ENCODE measurements at regions of chr19 and their contacts with region 1.

Region 1: DNA sequence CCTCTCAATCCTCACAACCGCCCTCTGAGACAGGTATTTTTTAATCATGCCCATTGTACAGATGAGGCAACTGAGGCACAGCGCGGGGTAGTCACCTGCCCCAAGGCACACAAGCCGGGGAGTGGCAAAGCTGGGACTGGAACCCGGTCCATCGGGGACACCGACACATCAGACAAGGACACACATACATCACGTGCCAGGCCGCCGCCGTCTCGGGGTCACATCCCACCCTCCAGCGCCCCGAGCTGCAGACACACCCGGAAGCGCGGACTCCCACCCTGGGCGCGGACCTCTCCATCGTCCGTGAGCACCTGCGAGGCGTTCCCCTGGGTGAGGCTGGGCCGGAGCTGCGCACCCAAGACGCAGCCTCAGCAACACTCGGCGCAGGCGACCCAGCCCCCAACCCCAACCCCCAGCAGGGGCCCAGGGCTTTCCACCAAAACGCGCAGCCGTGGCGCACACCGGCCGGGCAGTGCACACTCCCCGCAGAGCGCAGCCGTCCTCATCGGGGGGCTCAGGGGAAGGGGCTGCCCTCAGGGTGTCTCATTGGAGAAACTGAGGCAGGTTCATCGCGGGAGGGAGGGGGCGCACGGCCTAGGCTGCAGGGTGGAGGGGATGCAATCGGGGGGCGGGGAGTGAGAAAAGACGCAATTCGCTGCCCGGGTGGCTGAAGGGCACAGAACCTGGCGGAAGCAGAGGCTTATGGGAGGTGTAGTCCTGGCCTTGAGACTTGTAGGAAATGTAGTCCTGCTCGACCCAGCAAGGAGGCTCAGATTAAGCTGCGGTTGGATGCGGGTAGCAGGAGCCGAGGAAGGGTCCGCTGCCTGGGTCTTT is 1.9 kb upstream of the LMTK3 start:
- DNase-seq: peak; percentile 81
- ATAC-seq: peak; percentile 84

Region 2: DNA sequence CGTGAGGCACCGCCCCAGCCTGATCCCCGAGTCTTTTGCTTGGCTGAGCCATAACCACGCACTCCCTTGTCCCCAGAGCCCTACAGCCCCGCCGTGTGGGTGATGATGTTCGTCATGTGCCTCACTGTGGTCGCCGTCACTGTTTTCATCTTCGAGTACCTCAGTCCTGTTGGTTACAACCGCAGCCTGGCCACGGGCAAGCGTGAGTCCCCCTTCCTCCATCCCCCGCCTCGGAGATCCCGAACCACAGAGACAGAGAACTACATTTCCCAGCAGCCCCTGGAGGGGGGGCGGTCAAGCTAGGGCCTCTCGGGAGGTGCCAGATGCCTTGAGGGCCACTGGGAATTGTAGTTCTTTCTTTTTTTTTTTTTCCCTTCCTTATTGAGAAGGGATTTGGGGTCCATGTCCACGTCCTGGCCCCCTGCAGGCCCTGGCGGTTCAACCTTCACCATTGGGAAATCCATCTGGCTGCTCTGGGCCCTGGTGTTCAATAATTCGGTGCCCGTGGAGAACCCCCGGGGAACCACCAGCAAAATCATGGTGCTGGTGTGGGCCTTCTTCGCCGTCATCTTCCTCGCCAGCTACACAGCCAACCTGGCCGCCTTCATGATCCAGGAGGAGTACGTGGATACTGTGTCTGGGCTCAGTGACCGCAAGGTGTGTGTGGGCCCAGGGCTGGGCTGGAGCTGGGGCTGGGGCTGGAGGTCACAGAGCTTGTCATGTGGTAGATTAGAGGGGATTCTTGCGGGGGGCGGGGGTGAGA is 94.2 kb before region 1 on chr19:
- intact Hi-C with region 1: no loop called
- DNase-seq: no peak
- ATAC-seq: peak; percentile 32

Region 3: DNA sequence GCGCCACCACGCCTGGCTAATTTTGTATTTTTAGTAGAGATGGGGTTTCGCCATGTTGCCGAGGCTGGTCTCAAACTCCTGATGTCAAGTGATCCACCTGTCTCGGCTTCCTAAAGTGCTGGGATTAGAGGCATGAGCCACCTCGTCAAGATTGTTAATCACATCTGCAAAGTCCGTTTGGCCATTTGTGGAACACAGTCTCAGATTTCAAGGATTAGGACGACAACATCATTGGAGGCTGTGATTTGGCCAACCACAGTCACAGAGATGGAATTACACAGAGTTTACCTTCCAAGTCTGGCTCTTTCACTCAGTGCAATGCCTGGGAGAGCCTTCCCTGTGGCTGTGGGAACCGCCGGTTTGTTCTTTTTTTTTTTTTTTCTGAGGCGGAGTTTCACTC is 56.3 kb after region 1 on chr19:
- intact Hi-C with region 1: loop called (anchors 5 kb)
- DNase-seq: peak; percentile 25
- ATAC-seq: no peak